ENCODE measurements at regions of chr3 and their contacts with region 1.

Region 1: GRCh38 chr3:18847583-18848197 is 300.6 kb upstream of the KCNH8 start:
- DNase-seq: peak; percentile 10
- ATAC-seq: peak; percentile 56; the same call in 2 of the 3 replicates
- H3K4me3 ChIP-seq: no peak overlapping the region
- H3K27ac ChIP-seq: no peak overlapping the region
- H3K4me1 ChIP-seq: no peaks in the 10 kb centered on the region
- H3K27me3 ChIP-seq: no peaks in the 10 kb centered on the region
- CTCF ChIP-seq: peak; percentile 25; the same call in 1 of the 2 replicates
- EP300 ChIP-seq: no peak
- POLR2A ChIP-seq: no peak
- RAD21 ChIP-seq: no peak

Region 2: DNA sequence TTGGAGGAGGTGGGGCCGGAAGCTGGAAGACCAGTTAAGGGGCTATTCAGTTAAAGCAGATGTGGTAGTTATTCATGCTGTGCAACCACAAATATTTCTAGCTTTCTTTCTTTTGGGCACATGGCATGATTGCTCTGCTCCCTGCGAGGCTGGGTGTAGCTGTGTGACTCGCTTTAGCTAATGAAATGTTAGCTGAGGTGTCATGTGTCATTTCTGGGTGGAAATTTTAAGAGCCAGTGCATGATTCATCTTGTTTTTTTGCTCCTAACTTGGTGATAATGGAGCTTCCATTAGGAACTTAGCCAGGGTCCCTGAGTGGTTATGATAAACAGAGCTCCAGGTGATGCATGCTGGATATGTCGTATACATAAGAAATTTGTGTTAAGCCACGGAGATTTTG is 723.2 kb before region 1 on chr3:
- CTCF ChIA-PET with region 1: no interaction called
- POLR2A ChIA-PET with region 1: no interaction called
- in situ Hi-C with region 1: no loop called
- intact Hi-C with region 1: no loop called
- DNase-seq: no peak
- ATAC-seq: no peak
- H3K4me3 ChIP-seq: no peak overlapping the region
- H3K27ac ChIP-seq: no peak overlapping the region
- H3K4me1 ChIP-seq: no peaks in the 10 kb centered on the region
- H3K27me3 ChIP-seq: no peaks in the 10 kb centered on the region; a peak in 1 of 5 replicates
- CTCF ChIP-seq: no peak
- EP300 ChIP-seq: no peak
- POLR2A ChIP-seq: no peak
- RAD21 ChIP-seq: no peak

Region 3: DNA sequence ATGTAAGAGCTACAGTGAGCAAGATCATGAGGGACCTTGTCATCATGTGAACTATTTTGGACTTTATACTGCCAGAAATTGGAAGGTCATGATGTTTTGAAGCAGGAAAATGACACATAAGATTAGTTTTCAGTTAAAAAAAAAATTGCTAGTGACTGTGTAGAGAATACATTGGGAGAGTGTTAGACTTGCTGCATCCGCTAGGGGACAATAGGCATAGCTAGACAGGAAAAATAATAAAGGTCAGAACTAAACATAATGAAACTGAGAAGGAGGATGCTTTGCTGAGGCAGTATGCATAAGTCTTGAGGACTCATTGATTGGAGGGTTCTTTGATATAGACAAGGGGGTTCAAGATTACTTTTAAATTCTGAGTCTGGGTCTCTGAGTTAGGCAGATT is 24.8 kb after region 1 on chr3:
- CTCF ChIA-PET with region 1: no interaction called
- POLR2A ChIA-PET with region 1: no interaction called
- in situ Hi-C with region 1: no loop called
- intact Hi-C with region 1: no loop called
- DNase-seq: no peak
- ATAC-seq: peak; percentile 56; the same call in 1 of the 3 replicates
- H3K4me3 ChIP-seq: no peak overlapping the region
- H3K27ac ChIP-seq: no peak overlapping the region
- H3K4me1 ChIP-seq: no peaks in the 10 kb centered on the region
- H3K27me3 ChIP-seq: no peaks in the 10 kb centered on the region
- CTCF ChIP-seq: no peak
- EP300 ChIP-seq: no peak
- POLR2A ChIP-seq: no peak
- RAD21 ChIP-seq: no peak

Region 4: DNA sequence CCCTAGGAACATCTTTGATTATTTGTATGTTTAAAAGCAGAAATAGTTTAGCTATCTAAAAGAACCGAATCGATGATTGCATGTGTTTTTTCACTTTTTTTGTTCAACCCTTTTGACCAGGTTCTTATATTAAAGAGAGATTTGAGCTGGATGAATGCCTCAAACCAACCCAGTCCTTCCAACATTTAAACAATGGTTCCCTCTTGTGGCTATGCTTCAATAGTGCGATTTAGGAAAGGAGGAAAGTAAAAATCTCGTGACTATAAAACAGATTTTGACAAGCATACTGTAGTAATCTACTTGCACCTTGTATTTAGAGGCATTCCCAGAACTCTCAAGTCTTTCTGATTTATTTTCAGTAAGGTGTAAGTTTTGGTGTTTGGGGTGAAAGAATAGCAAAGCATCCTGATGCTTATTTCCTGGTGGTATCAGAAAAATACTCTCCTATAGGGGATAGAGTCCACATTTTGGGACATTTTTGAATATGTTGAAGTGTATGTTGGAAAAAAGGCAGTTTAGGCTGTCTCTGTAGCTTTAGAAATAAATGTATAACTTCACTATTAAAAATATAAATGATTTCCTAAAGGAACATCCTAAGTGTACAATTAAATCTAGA is 141.0 kb after region 1 on chr3:
- CTCF ChIA-PET with region 1: interaction called, 12 read pairs
- POLR2A ChIA-PET with region 1: no interaction called
- in situ Hi-C with region 1: loop called (anchors 10 kb)
- intact Hi-C with region 1: loop called (anchors 1 kb)
- DNase-seq: peak; percentile 12
- ATAC-seq: peak; percentile 44; the same call in 1 of the 3 replicates
- H3K4me3 ChIP-seq: no peak overlapping the region
- H3K27ac ChIP-seq: no peak overlapping the region
- H3K4me1 ChIP-seq: no peaks in the 10 kb centered on the region
- H3K27me3 ChIP-seq: no peaks in the 10 kb centered on the region
- CTCF ChIP-seq: peak; percentile 49
- EP300 ChIP-seq: no peak
- POLR2A ChIP-seq: no peak
- RAD21 ChIP-seq: no peak

Measured in HepG2 (cell line).